Naive thymus-derived CD8-positive, alpha-beta T cell (primary cell): ENCODE measurements at regions of chr9 and their contacts with region 1.

Region 1: GRCh38 chr9:74908665-74909064 is 20.9 kb upstream of the TRPM6 start:
- DNase-seq: no peak
- ATAC-seq: no peak
- H3K4me3 Mint-ChIP-seq: no peak overlapping the region
- H3K27ac Mint-ChIP-seq: no peak overlapping the region
- H3K4me1 Mint-ChIP-seq: no peaks in the 10 kb centered on the region
- H3K27me3 Mint-ChIP-seq: peaks cover 13 to 30% (median 26%) of the 10 kb centered on the region in 5 donors

Region 2: GRCh38 chr9:75116306-75116705 is 207.6 kb after region 1 on chr9:
- POLR2A ChIA-PET with region 1: interaction called, 11 read pairs
- DNase-seq: no peak
- ATAC-seq: no peak
- H3K4me3 Mint-ChIP-seq: no peak overlapping the region
- H3K27ac Mint-ChIP-seq: peak overlapping the region in 5 of 10 donors; percentile 3 to 74 (median 42)
- H3K4me1 Mint-ChIP-seq: peaks cover 31 to 77% (median 59%) of the 10 kb centered on the region in 4 donors
- H3K27me3 Mint-ChIP-seq: no peaks in the 10 kb centered on the region